Natural killer cell (primary cell): ENCODE measurements at regions of chr18 and their contacts with region 1.

Region 1: GRCh38 chr18:56709463-56709862 is 58.3 kb downstream of the WDR7 start:
- DNase-seq: peak in 1 of 2 donors; percentile 72
- ATAC-seq: peak; percentile 95 to 100 (median 99)
- H3K4me3 ChIP-seq: no peak overlapping the region
- H3K4me3 Mint-ChIP-seq: no peak overlapping the region
- H3K27ac ChIP-seq: no peak overlapping the region
- H3K27ac Mint-ChIP-seq: peak overlapping the region in 1 of 2 donors; percentile 29
- H3K4me1 ChIP-seq: no peaks in the 10 kb centered on the region
- H3K4me1 Mint-ChIP-seq: peaks cover 5% of the 10 kb centered on the region in 2 donors
- H3K27me3 ChIP-seq: no peaks in the 10 kb centered on the region
- H3K27me3 Mint-ChIP-seq: no peaks in the 10 kb centered on the region
- CTCF ChIP-seq: peak; percentile 53

Region 2: DNA sequence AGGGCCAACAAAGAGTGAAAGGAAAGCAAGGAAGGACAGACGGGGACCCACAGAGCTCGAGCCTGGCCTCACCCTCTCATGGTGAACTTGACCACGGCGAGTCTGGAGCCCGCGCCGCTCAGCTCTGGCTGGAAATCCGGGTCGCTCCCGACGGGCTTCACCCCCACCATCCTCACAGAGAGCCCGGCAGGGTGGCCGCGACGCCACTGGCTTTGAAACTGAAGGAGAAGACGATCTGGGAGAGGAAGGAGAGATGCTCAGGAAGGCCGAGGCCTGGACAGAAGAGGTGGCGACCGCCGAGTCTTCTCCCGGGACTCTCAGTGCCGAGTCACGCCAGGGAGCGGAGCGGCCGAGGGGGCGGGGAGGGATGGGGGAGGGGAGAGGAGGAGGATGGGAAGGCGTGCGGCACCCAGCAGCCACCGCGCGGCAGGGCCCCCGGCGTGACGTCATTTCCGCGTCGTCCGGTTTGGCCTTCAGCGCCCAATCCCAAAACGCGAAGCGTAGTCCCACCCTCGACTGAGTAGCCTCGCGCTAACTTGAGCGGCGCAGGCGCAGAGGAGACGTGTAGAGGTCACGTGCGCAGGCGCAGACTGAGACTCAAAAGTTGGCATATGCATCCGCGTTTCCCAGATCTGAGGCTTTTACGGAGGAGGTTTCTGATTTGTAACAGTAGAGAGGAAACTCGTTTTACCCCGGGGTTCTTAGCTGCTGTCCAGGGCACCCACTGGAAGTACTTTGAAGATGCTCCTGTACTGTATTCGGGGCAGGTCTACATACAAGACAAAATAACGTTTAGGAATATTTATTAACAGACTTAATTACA is 71.0 kb before region 1 on chr18 and contains the start of gene TXNL1:
- intact Hi-C with region 1: loop called (anchors 5 kb)
- DNase-seq: peak; percentile 98 to 100
- ATAC-seq: peak; percentile 96 to 100 (median 97)
- H3K4me3 ChIP-seq: peak within 1 kb of the TSS; percentile 93
- H3K4me3 Mint-ChIP-seq: peak within 1 kb of the TSS; percentile 100
- H3K27ac ChIP-seq: peak within 1 kb of the TSS; percentile 96
- H3K27ac Mint-ChIP-seq: peak within 1 kb of the TSS; percentile 96 to 99
- H3K4me1 ChIP-seq: peaks cover 9% of the 10 kb centered on the region
- H3K4me1 Mint-ChIP-seq: peaks cover 48% of the 10 kb centered on the region in 2 donors
- H3K27me3 ChIP-seq: no peaks in the 10 kb centered on the region
- H3K27me3 Mint-ChIP-seq: no peaks in the 10 kb centered on the region
- CTCF ChIP-seq: no peak
- total RNA-seq, gene TXNL1: 43.2 to 44.8 (median 44.0) TPM

Region 3: GRCh38 chr18:56672391-56672790 is 37.1 kb before region 1 on chr18:
- intact Hi-C with region 1: loop called (anchors 5 kb)
- DNase-seq: no peak
- ATAC-seq: no peak
- H3K4me3 ChIP-seq: no peak overlapping the region
- H3K4me3 Mint-ChIP-seq: no peak overlapping the region
- H3K27ac ChIP-seq: no peak overlapping the region
- H3K27ac Mint-ChIP-seq: no peak overlapping the region
- H3K4me1 ChIP-seq: peaks cover 14% of the 10 kb centered on the region
- H3K4me1 Mint-ChIP-seq: peaks cover 22 to 40% of the 10 kb centered on the region in 2 donors
- H3K27me3 ChIP-seq: no peaks in the 10 kb centered on the region
- H3K27me3 Mint-ChIP-seq: no peaks in the 10 kb centered on the region
- CTCF ChIP-seq: no peak

Region 4: DNA sequence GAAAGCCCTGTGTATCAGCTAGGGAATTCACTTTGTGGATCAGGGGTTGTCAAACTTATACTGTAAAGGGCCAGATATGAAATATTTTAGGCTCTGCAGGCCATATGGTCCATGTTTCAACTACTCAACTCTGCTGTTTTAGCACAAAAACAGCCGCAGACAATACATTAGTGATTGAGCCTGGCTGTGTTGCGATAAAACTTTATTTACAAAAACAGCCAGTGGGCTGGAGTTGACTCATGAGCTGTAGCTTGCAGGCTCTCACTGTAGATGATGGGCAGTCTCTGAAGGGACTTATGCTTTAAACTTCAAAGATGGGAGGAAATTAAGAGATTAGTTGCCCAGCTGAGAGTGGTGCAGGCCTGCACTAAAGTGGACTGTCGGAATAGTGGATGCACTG is 25.2 kb before region 1 on chr18:
- intact Hi-C with region 1: no loop called
- DNase-seq: no peak
- ATAC-seq: no peak
- H3K4me3 ChIP-seq: no peak overlapping the region
- H3K4me3 Mint-ChIP-seq: no peak overlapping the region
- H3K27ac ChIP-seq: no peak overlapping the region
- H3K27ac Mint-ChIP-seq: no peak overlapping the region
- H3K4me1 ChIP-seq: no peaks in the 10 kb centered on the region
- H3K4me1 Mint-ChIP-seq: no peaks in the 10 kb centered on the region
- H3K27me3 ChIP-seq: no peaks in the 10 kb centered on the region
- H3K27me3 Mint-ChIP-seq: no peaks in the 10 kb centered on the region
- CTCF ChIP-seq: no peak